Heart right ventricle (tissue), 16 donors: ENCODE measurements at regions of chr12 and their contacts with region 1.

Region 1: DNA sequence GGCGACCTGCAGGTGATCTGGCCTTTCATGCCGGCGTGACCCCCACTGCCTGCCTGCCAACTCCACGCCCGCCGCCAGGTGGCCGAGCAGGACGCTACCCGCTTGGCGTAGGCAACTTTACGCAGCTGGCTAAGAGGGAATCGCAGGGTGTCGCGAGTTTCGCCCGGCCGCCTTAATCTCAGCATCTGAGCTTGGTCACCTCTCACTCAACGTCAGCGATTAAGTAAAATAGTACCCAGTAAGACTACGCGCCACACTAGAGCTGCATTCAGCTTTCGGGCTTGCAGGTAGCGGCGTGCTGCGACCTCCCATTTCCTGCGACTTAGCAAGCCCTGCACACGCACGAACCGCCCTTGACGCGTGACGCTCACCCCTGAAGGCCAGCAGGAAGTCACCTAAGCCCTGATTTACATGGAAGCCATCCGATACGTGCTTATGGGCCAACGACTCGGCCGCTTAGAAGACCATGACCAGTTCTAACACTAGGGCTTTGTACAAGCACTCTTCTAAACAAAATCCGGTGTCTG is 33.2 kb downstream of the WBP11 start:
- DNase-seq: peak; percentile 80 to 82
- ATAC-seq: peak; percentile 41 to 81 (median 69)
- H3K4me3 ChIP-seq: peak overlapping the region; percentile 51 to 94 (median 73)
- H3K27ac ChIP-seq: peak overlapping the region; percentile 88 to 98 (median 94)
- H3K4me1 ChIP-seq: peaks cover 4 to 52% (median 25%) of the 10 kb centered on the region in 9 donors
- H3K27me3 ChIP-seq: no peaks in the 10 kb centered on the region
- CTCF ChIP-seq: peak; percentile 64 to 78 (median 75)

Region 2: GRCh38 chr12:14514154-14514842 is 255.7 kb before region 1 on chr12:
- intact Hi-C with region 1: no loop called
- DNase-seq: peak in 1 of 2 donors; percentile 38
- ATAC-seq: peak in 6 of 8 donors; percentile 34 to 75 (median 52)
- H3K4me3 ChIP-seq: no peak overlapping the region
- H3K27ac ChIP-seq: no peak overlapping the region
- H3K4me1 ChIP-seq: no peaks in the 10 kb centered on the region
- H3K27me3 ChIP-seq: no peaks in the 10 kb centered on the region
- CTCF ChIP-seq: peak in 8 of 9 donors; percentile 26 to 64 (median 51)

Region 3: GRCh38 chr12:14803011-14803829 is 33.2 kb after region 1 on chr12 and contains the starts of genes C12orf60 and WBP11:
- intact Hi-C with region 1: loop called in 3 of 10 experiments (anchors 2 kb)
- DNase-seq: peak; percentile 84 to 97
- ATAC-seq: peak; percentile 100
- H3K4me3 ChIP-seq: peak within 1 kb of the TSS; percentile 69 to 98 (median 88)
- H3K27ac ChIP-seq: peak within 1 kb of the TSS; percentile 55 to 95 (median 88)
- H3K4me1 ChIP-seq: peaks cover 0 to 31% (median 26%) of the 10 kb centered on the region in 9 donors
- H3K27me3 ChIP-seq: no peaks in the 10 kb centered on the region
- CTCF ChIP-seq: no peak
- total RNA-seq, gene C12orf60: 1.2 to 5.8 (median 3.7) TPM
- total RNA-seq, gene WBP11: 47.6 to 62.3 (median 56.0) TPM